PC-9 (cell line): ENCODE measurements at regions of chr16 and their contacts with region 1.

Region 1: GRCh38 chr16:81006814-81007696 is at the starts of genes CENPN and CMC2:
- DNase-seq: peak; percentile 95 to 97
- H3K4me3 ChIP-seq: peak within 1 kb of the TSS; percentile 87
- H3K27ac ChIP-seq: peak within 1 kb of the TSS; percentile 80
- H3K4me1 ChIP-seq: peaks cover 28% of the 10 kb centered on the region
- H3K27me3 ChIP-seq: no peaks in the 10 kb centered on the region
- CTCF ChIP-seq: no peak
- total RNA-seq, gene CENPN: 68.9 and 84.2 TPM in 2 replicates
- total RNA-seq, gene CMC2: 89.5 and 106 TPM in 2 replicates

Region 2: GRCh38 chr16:80899809-80900592 is 107.1 kb before region 1 on chr16:
- CTCF ChIA-PET with region 1: no interaction called
- POLR2A ChIA-PET with region 1: no interaction called
- intact Hi-C with region 1: no loop called
- DNase-seq: no peak
- H3K4me3 ChIP-seq: no peak overlapping the region
- H3K27ac ChIP-seq: no peak overlapping the region
- H3K4me1 ChIP-seq: no peaks in the 10 kb centered on the region
- H3K27me3 ChIP-seq: peaks cover 64% of the 10 kb centered on the region
- CTCF ChIP-seq: no peak

Region 3: GRCh38 chr16:80993307-80993706 is 13.7 kb before region 1 on chr16:
- CTCF ChIA-PET with region 1: interaction called, 16 read pairs
- POLR2A ChIA-PET with region 1: no interaction called
- intact Hi-C with region 1: loop called (anchors 1 kb)
- DNase-seq: peak; percentile 67 to 84
- H3K4me3 ChIP-seq: peak overlapping the region; percentile 19; the same call in 1 of the 2 replicates
- H3K27ac ChIP-seq: peak overlapping the region; percentile 73
- H3K4me1 ChIP-seq: peaks cover 18% of the 10 kb centered on the region; the same call in 1 of the 2 replicates
- H3K27me3 ChIP-seq: no peaks in the 10 kb centered on the region
- CTCF ChIP-seq: no peak

Region 4: DNA sequence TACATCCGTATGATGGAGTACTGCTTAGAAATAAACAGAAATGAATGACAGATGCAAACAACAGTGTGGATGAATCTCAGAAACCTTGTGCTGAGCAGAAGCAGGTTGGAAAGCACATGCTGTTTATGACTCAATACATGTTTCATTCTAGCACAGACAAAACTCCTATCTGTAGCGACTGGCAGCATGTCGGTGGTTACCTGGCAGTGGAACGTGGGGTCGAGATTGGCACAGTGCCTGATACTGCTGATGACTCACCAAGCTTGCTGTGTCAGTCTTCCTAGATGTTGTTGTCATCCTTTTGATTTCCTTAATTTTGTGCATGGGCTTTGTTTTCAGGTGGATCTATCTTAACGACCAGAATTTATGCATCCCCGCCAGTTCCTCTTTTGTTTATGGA is 369.8 kb after region 1 on chr16:
- CTCF ChIA-PET with region 1: no interaction called
- POLR2A ChIA-PET with region 1: no interaction called
- intact Hi-C with region 1: no loop called
- DNase-seq: peak in 1 of 2 experiments; percentile 51
- H3K4me3 ChIP-seq: no peak overlapping the region
- H3K27ac ChIP-seq: no peak overlapping the region
- H3K4me1 ChIP-seq: no peaks in the 10 kb centered on the region
- H3K27me3 ChIP-seq: no peaks in the 10 kb centered on the region
- CTCF ChIP-seq: no peak

Region 5: DNA sequence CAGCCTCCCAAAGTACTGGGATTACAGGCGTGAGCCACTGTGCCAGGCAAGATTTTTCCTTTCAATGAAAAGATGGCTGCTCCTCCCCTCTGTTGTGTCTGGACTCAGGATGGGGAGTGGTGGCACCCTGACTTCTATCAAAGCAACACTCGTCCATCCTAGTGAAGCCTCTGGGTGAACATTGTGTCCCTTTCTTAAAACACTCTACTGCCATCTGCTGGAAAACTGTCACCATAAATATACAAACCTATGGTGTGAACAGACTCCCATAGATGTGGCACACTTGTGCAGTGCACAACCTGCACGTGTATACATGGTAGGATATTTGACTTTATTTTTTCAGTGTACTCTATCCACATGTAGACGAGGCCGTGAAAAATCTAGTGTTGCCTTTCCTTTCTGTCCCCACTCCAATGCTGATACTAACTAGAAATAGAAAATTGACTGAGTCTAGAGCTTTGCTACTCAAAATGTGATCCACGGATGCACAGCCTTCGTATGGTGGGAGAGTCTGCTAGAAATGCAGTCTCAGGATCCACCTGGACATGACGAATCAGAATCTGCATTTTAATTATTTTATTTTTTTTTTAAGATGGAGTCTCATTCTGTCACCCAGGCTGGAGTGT is 716.2 kb after region 1 on chr16:
- CTCF ChIA-PET with region 1: interaction called, 3 read pairs
- POLR2A ChIA-PET with region 1: no interaction called
- intact Hi-C with region 1: loop called (anchors 10 kb)
- DNase-seq: peak; percentile 38 to 74
- H3K4me3 ChIP-seq: no peak overlapping the region
- H3K27ac ChIP-seq: no peak overlapping the region
- H3K4me1 ChIP-seq: no peaks in the 10 kb centered on the region
- H3K27me3 ChIP-seq: no peaks in the 10 kb centered on the region
- CTCF ChIP-seq: peak; percentile 80